HEK293T (cell line): ENCODE measurements at regions of chr6 and their contacts with region 1.

Region 1: GRCh38 chr6:74554041-74554440 is 651.8 kb downstream of the COL12A1 start:
- DNase-seq: no peak

Region 2: DNA sequence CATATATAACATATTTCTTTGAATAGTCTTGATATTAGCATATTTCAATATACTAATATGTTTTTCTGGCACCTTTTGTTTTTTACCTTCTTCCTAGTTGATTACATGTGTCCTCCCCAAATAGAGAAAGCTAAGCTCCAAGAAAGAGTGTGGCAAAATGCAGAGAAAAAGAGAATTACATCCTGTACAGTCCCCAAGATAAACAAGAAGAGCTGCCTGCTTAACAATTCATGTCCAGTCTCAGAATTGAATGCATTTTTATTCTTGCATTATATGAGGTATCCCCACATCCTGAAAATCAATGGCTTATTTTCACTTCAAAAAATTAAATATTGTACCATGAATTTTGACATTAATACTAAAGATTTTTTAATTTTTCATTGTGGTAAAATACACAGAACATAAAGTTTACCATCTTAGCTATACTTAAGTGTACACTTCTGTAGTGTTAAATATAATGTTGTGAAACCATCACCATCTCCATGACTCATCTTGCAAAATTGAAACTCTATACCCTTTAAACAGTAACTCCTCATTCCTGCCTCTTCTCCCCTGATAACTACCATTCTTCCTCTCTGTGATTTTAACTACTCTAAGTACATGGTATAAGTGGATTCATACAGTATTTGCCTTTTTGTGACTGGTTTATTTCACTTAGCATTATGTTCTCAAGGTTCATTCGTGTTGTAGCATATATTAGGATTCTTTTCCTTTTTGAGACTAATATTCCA is 161.5 kb after region 1 on chr6:
- CTCF ChIA-PET with region 1: no interaction called
- POLR2A ChIA-PET with region 1: no interaction called
- DNase-seq: no peak

Region 3: DNA sequence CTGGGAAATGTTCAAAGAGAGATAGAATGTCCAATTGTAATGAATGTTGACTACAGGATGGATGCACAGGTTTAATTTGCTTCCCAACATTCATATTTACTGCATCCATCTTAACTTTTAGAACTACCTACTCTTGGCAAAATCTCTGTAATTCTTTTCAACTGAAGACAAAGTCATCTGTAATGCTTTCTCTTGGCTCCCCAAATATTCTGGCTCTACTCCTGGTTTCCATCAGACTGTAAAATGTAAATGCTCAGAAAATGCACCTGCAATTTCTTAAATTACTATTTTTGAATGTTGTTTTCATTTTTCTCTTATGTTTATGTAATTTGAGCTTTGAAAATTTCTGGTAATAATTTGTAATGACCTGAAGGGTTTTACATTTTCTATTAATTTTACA is 1999.2 kb after region 1 on chr6:
- CTCF ChIA-PET with region 1: interaction called, 12 read pairs
- POLR2A ChIA-PET with region 1: no interaction called
- DNase-seq: no peak